A673 (cell line): ENCODE measurements at regions of chr4 and their contacts with region 1.

Region 1: DNA sequence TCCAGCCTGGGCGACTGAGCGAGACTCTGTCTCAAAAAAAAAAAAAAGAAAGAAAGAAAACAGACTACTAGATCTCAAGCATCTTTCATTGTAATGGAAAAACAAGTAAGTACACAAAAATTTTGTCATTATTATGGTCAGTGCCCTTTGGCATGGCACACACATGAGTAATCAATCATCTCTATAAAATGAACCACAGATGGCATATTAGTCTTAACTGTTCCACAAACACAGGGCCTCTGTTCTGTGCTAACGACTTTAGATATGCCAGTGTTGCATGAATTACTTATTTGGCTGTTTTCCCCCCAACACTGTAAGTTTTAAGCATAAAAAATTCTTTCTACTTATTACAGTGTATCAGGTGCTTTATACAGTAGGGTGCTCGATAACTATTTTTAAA is 90.4 kb downstream of the COX7B2 start:
- DNase-seq: no peak
- H3K4me3 ChIP-seq: no peak overlapping the region
- H3K27ac ChIP-seq: no peak overlapping the region
- H3K4me1 ChIP-seq: no peaks in the 10 kb centered on the region
- H3K27me3 ChIP-seq: no peaks in the 10 kb centered on the region
- CTCF ChIP-seq: no peak

Region 2: GRCh38 chr4:46765465-46765864 is 53.1 kb before region 1 on chr4:
- CTCF ChIA-PET with region 1: no interaction called
- POLR2A ChIA-PET with region 1: no interaction called
- intact Hi-C with region 1: loop called (anchors 5 kb)
- DNase-seq: no peak
- H3K4me3 ChIP-seq: no peak overlapping the region
- H3K27ac ChIP-seq: no peak overlapping the region
- H3K4me1 ChIP-seq: no peaks in the 10 kb centered on the region
- H3K27me3 ChIP-seq: no peaks in the 10 kb centered on the region
- CTCF ChIP-seq: no peak

Region 3: DNA sequence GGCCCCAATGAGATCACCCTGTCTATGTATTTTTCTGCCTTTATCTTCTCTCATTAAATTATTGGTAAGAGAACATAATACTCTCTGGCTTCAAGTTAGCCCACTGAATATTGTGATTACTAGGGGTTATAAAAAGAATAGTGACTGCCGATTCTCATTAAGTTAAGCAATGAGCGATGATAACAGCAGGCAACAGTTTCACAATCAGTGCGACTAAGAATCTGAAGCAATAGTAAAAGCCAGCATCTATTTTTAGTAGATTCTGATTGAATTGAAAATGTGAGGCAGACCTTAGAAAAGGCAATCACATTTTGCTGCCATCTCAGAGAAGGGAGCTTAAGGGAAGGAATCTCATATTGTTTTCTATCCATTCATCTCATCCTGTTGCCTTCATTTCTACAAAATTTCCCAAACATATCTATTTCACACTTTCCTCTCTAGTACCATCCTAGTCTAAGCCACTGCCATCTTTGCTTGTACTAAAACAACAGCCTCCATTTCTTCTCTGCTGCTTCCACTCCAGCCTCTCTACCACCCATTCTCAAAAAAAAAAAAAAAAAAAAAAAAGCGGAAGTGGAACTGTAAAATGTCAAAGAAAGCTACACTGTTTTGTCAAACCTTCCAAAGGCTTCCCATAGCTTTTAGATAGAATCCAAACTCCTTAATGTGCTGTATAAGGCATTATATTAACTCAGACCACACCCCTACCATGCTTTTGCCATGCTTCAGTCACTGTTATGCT is 157.4 kb after region 1 on chr4:
- CTCF ChIA-PET with region 1: no interaction called
- POLR2A ChIA-PET with region 1: no interaction called
- intact Hi-C with region 1: no loop called
- DNase-seq: peak; percentile 16
- H3K4me3 ChIP-seq: no peak overlapping the region
- H3K27ac ChIP-seq: no peak overlapping the region
- H3K4me1 ChIP-seq: no peaks in the 10 kb centered on the region
- H3K27me3 ChIP-seq: no peaks in the 10 kb centered on the region
- CTCF ChIP-seq: no peak